Gastrocnemius medialis (tissue), 4 donors: ENCODE measurements at regions of chr2 and their contacts with region 1.

Region 1: GRCh38 chr2:119759451-119760236 is at the start of gene PTPN4:
- DNase-seq: peak; percentile 94 to 96
- ATAC-seq: peak; percentile 86 to 90
- H3K4me3 ChIP-seq: peak within 1 kb of the TSS; percentile 61 to 89 (median 84)
- H3K27ac ChIP-seq: peak within 1 kb of the TSS; percentile 91 to 96 (median 95)
- H3K4me1 ChIP-seq: peaks cover 47 to 50% of the 10 kb centered on the region in 2 donors
- H3K27me3 ChIP-seq: no peaks in the 10 kb centered on the region
- CTCF ChIP-seq: no peak
- POLR2A ChIP-seq: peak; percentile 81 to 86
- total RNA-seq, gene PTPN4: 12.7 to 37.8 (median 33.5) TPM

Region 2: GRCh38 chr2:118847497-118848172 is 912.0 kb before region 1 on chr2 and contains the start of gene EN1:
- in situ Hi-C with region 1: no loop called
- intact Hi-C with region 1: loop called (anchors 5 kb)
- DNase-seq: peak; percentile 88 to 94
- ATAC-seq: peak; percentile 46 to 52
- H3K4me3 ChIP-seq: peak within 1 kb of the TSS; percentile 56 to 93 (median 80)
- H3K27ac ChIP-seq: peak within 1 kb of the TSS; percentile 92 to 97 (median 96)
- H3K4me1 ChIP-seq: peaks cover 5 to 9% of the 10 kb centered on the region in 2 donors
- H3K27me3 ChIP-seq: no peaks in the 10 kb centered on the region
- CTCF ChIP-seq: no peak
- POLR2A ChIP-seq: peak; percentile 83 to 86
- total RNA-seq, gene EN1: 3.9 to 11.0 (median 6.7) TPM

Region 3: DNA sequence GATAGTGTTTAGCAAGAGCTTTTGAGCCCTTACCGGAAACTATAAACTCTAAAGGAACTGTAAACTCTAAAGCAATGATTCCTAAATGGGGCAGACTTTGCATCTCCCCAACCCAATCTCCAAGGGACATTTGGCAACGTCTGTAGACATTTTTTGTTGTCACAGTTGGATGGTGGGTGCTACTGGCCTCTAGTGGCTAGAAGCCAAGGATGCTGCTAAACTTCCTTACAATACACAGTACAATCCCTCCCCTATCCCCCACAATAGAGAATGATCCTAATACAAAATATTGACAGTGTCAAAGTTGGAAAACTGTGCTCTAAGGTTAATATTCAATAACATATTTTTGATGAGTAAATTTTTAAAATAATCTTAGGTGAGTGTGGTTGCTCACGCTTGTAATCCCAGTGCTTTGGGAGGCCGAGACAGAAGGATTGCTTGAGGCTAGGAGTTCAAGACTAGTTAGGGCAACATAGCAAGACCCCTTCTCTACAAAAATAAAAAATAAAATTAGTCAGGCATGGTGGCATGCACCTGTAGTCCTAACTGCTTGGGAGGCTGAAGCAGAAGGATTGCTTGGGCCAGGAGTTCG is 66.8 kb after region 1 on chr2:
- in situ Hi-C with region 1: loop called in 3 of 4 experiments (anchors 5 to 10 kb)
- intact Hi-C with region 1: no loop called
- DNase-seq: no peak
- ATAC-seq: no peak
- H3K4me3 ChIP-seq: no peak overlapping the region
- H3K27ac ChIP-seq: peak overlapping the region in 1 of 4 donors; percentile 26
- H3K4me1 ChIP-seq: peaks cover 13 to 32% of the 10 kb centered on the region in 2 donors
- H3K27me3 ChIP-seq: no peaks in the 10 kb centered on the region
- CTCF ChIP-seq: peak in 3 of 5 experiments; percentile 29 to 40 (median 37)
- POLR2A ChIP-seq: no peak

Region 4: DNA sequence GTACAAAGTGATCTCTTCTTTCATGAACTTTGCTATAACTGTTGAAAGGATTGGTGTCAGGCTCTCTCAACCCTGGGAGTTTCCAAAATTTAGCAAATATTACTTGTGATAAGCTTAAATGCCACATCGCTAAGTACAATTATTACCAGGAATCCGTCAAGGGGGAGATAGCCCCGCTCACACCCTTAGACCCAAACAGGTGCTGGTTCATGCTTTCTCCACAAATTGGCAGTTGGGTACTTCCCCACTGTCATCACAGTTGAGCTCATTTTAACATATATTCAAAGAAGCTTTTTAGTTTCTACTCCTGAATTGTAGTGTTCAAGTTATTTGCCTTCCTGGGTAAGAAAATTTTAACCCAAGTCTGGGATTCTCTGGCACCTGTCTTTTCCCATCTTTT is 223.5 kb after region 1 on chr2:
- in situ Hi-C with region 1: no loop called
- intact Hi-C with region 1: no loop called
- DNase-seq: no peak
- ATAC-seq: no peak
- H3K4me3 ChIP-seq: no peak overlapping the region
- H3K27ac ChIP-seq: no peak overlapping the region
- H3K4me1 ChIP-seq: no peaks in the 10 kb centered on the region
- H3K27me3 ChIP-seq: no peaks in the 10 kb centered on the region
- CTCF ChIP-seq: no peak
- POLR2A ChIP-seq: no peak

Region 5: GRCh38 chr2:120012771-120013596 is 253.3 kb after region 1 on chr2 and contains the start of gene EPB41L5:
- in situ Hi-C with region 1: loop called in 1 of 4 experiments (anchors 25 kb)
- intact Hi-C with region 1: loop called (anchors 5 kb)
- DNase-seq: peak; percentile 84 to 91
- ATAC-seq: peak; percentile 92 to 94
- H3K4me3 ChIP-seq: peak within 1 kb of the TSS; percentile 88 to 98 (median 95)
- H3K27ac ChIP-seq: peak within 1 kb of the TSS; percentile 89 to 97 (median 92)
- H3K4me1 ChIP-seq: peaks cover 13 to 25% of the 10 kb centered on the region in 2 donors
- H3K27me3 ChIP-seq: no peaks in the 10 kb centered on the region
- CTCF ChIP-seq: peak in 1 of 5 experiments; percentile 15
- POLR2A ChIP-seq: peak; percentile 84 to 92
- total RNA-seq, gene EPB41L5: 8.3 to 41.1 (median 12.7) TPM

Region 6: GRCh38 chr2:120174963-120175581 is 415.4 kb after region 1 on chr2:
- in situ Hi-C with region 1: loop called in 3 of 4 experiments (anchors 5 to 25 kb)
- intact Hi-C with region 1: no loop called
- DNase-seq: no peak
- ATAC-seq: peak; percentile 34 to 38
- H3K4me3 ChIP-seq: no peak overlapping the region
- H3K27ac ChIP-seq: peak overlapping the region in 1 of 4 donors; percentile 12
- H3K4me1 ChIP-seq: peaks cover 16 to 18% of the 10 kb centered on the region in 2 donors
- H3K27me3 ChIP-seq: no peaks in the 10 kb centered on the region
- CTCF ChIP-seq: peak; percentile 61 to 79 (median 71)
- POLR2A ChIP-seq: no peak

Region 7: GRCh38 chr2:120445428-120446136 is 685.9 kb after region 1 on chr2:
- in situ Hi-C with region 1: no loop called
- intact Hi-C with region 1: no loop called
- DNase-seq: no peak
- ATAC-seq: peak; percentile 42 to 75
- H3K4me3 ChIP-seq: no peak overlapping the region
- H3K27ac ChIP-seq: no peak overlapping the region
- H3K4me1 ChIP-seq: peaks cover 6 to 9% of the 10 kb centered on the region in 2 donors
- H3K27me3 ChIP-seq: peaks cover 11 to 20% (median 15%) of the 10 kb centered on the region in 3 donors
- CTCF ChIP-seq: no peak
- POLR2A ChIP-seq: no peak

Region 8: DNA sequence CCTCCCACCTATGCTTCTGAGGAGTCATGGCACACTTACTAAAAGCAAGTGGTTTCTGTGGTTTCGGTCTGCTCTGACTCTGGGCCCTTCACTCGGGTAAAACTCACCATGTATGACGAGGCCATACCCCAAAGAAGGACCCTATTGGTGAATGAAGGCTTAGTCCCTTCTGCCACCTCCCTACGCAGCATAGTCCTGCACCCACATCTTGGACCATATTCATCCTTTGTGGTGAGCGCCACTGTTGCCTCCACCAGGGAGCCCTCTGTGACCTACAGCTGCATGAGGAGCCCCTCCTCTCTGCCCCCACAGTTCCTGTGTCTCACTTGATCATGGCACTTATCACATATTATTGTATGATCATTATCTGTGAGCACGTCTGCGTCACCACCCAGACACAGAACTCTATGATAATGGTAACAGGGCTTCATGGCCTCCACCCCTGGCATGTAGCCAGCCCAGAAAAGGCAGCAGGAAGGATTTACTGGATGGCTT is 1412.0 kb after region 1 on chr2:
- in situ Hi-C with region 1: no loop called
- intact Hi-C with region 1: loop called (anchors 10 kb)
- DNase-seq: no peak
- ATAC-seq: no peak
- H3K4me3 ChIP-seq: no peak overlapping the region
- H3K27ac ChIP-seq: no peak overlapping the region
- H3K4me1 ChIP-seq: peaks cover 0 to 8% of the 10 kb centered on the region in 2 donors
- H3K27me3 ChIP-seq: peaks cover 0 to 4% (median 0%) of the 10 kb centered on the region in 3 donors
- CTCF ChIP-seq: no peak
- POLR2A ChIP-seq: no peak